BJ (cell line): ENCODE measurements at regions of chr11 and their contacts with region 1.

Region 1: DNA sequence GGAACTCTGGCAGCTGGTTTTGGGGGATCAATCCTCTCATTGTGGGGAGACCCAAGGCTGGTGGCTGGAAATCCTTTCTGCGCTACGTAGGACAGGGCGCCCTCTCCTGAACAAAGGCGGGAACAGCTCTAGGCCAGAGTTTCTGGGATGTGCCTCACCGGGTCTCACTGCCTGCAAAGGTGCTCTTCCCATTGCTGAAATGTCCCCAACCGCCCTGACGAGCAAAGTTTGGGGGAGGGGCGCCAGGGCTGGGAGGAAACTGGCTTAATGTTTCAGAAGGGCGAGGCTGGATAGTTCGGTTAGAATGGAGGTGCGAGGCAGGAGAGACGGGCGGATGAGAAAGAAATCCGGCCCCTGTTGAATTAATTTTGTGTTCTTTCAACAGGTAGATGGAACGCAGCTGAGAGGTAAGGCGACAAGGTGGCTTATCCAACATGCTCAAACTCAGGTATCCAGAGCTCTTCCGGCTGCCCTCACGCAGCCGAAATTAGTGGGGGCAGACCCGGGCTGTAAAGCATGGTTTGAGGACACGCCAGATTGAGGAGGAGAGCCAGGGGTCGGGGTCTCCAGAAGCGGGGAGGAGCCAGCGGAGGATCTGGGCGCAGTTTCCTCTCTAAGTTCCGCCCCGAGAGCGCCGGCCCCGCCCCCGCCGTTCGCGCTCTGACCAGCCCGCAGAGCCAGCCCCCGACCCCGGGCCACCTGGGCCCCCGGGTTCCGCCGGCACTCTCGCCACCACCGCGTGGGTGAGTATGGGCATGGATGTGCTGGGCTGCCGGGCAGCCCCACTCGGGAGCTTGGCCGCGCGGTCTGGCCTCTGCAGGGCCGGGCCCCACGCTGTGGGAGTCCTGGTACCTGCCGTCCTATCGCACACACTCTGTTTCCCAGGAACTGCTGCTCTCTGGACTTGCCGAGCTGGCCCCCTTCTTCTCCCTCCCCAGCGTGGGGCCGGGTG is at the start of gene PGAP2:
- DNase-seq: no peak
- H3K4me3 ChIP-seq: peak within 1 kb of the TSS; percentile 80
- H3K27me3 ChIP-seq: no peaks in the 10 kb centered on the region
- CTCF ChIP-seq: peak; percentile 88
- polyA plus RNA-seq, gene PGAP2: 22.3 and 34.9 TPM in 2 replicates

Region 2: GRCh38 chr11:3609416-3610265 is 198.5 kb before region 1 on chr11:
- CTCF ChIA-PET with region 1: interaction called, 24 read pairs
- POLR2A ChIA-PET with region 1: no interaction called
- DNase-seq: no peak
- H3K4me3 ChIP-seq: no peak overlapping the region
- H3K27me3 ChIP-seq: no peaks in the 10 kb centered on the region
- CTCF ChIP-seq: peak; percentile 94

Region 3: DNA sequence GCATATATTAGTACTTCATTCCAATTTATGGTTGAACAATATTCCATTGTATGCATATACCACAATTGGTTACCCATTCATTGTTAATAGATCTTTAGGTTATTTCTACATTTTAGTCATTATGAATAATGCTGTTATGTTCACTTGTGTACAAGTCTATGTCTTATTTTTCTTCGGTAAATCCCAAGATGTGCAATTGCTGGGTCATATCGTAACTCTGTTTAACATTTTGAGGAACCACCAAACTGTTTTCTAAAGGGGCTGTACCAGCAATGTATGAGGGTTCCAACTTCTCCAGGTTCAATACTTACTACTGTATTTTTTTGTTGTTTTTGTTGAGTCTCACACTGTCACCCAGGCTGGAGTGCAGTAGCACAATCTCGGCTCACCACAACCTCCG is 43.9 kb before region 1 on chr11:
- CTCF ChIA-PET with region 1: no interaction called
- POLR2A ChIA-PET with region 1: no interaction called
- DNase-seq: no peak
- H3K4me3 ChIP-seq: no peak overlapping the region
- H3K27me3 ChIP-seq: no peaks in the 10 kb centered on the region
- CTCF ChIP-seq: no peak

Region 4: GRCh38 chr11:3775736-3776406 is 32.3 kb before region 1 on chr11:
- CTCF ChIA-PET with region 1: interaction called, 10 read pairs
- POLR2A ChIA-PET with region 1: no interaction called
- DNase-seq: no peak
- H3K4me3 ChIP-seq: no peak overlapping the region
- H3K27me3 ChIP-seq: no peaks in the 10 kb centered on the region
- CTCF ChIP-seq: no peak

Region 5: DNA sequence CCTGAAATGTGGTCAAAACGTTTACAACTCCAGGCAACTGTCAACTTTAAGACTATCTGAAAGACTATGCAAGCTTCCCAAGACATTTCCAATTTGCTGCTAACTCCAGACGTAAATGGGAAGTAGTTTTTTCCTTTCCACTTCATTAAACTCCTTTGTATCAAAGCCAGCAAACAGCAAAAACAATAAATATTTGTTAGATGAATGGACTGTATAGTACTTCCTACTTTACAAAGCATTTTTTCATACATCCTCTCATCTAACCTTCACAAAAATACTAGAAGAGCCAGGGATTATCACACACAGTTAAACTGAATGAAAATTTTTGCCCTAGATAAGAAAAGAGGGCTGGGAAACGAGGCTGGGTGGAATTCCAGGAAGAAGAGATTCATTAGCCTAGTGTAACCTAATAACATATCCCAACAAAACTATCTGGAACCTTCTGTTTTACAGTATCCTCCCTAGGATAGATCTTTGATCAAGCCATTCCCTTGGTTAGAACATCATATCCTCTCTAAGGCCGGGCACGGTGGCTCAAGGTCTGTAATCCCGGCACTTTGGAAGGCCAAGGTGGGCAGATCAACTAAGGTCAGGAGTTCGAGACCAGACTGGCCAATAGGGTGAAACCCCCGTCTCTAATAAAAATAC is 21.3 kb before region 1 on chr11:
- CTCF ChIA-PET with region 1: interaction called, 17 read pairs
- POLR2A ChIA-PET with region 1: no interaction called
- DNase-seq: no peak
- H3K4me3 ChIP-seq: no peak overlapping the region
- H3K27me3 ChIP-seq: no peaks in the 10 kb centered on the region
- CTCF ChIP-seq: no peak

Region 6: DNA sequence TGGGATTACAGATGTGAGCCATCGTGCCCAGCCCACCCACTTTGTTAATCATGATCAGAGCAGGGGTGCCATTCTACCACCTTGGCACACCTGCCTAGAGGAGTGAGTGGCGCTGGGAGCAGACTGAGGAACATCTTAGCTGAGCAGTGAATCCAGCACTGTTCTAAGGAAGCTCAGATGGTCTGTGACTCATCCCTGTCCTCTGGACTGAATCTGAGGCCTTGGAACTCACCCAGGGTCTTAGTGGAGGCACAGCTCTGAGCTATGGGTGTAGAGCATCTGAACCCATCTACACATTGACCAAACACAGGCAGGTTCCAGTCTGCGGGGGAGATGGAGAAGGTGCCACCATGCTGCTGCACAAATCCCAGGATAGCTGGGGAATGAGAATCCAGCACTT is 15.1 kb after region 1 on chr11:
- CTCF ChIA-PET with region 1: interaction called, 30 read pairs
- POLR2A ChIA-PET with region 1: no interaction called
- DNase-seq: peak; percentile 27
- H3K4me3 ChIP-seq: no peak overlapping the region
- H3K27me3 ChIP-seq: no peaks in the 10 kb centered on the region
- CTCF ChIP-seq: no peak

Region 7: DNA sequence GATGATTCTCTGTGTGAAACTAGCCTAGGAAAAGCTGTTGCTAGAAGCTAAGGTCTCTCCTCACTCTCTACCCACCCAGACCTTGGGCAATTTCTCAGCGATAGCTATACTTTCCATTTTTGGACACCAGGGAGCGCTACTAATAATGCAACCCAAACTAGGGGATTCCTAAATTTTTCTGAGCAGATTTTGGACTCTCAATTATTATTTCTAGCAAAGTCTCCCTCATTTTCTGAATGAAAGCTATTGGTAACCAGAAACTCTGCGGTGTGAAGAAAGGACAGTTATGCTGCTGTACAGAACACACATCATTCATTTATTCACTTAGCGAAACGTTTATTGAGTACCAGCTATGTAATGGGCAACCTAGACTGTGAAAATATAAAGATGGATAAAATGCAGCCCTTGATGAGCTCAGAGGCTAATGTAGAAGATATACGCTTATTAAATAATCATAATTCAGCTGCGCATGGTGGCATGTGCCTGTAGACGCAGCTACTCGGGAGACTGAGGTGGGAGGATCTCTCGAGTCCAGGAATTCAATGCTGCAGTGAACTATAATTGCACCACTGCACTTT is 41.2 kb after region 1 on chr11:
- CTCF ChIA-PET with region 1: interaction called, 13 read pairs
- POLR2A ChIA-PET with region 1: no interaction called
- DNase-seq: no peak
- H3K4me3 ChIP-seq: no peak overlapping the region
- H3K27me3 ChIP-seq: no peaks in the 10 kb centered on the region
- CTCF ChIP-seq: peak; percentile 70

Region 8: GRCh38 chr11:3894128-3894731 is 86.0 kb after region 1 on chr11:
- CTCF ChIA-PET with region 1: no interaction called
- POLR2A ChIA-PET with region 1: no interaction called
- DNase-seq: no peak
- H3K4me3 ChIP-seq: no peak overlapping the region
- H3K27me3 ChIP-seq: no peaks in the 10 kb centered on the region
- CTCF ChIP-seq: no peak